BJ (cell line): ENCODE measurements at regions of chr2 and their contacts with region 1.

Region 1: DNA sequence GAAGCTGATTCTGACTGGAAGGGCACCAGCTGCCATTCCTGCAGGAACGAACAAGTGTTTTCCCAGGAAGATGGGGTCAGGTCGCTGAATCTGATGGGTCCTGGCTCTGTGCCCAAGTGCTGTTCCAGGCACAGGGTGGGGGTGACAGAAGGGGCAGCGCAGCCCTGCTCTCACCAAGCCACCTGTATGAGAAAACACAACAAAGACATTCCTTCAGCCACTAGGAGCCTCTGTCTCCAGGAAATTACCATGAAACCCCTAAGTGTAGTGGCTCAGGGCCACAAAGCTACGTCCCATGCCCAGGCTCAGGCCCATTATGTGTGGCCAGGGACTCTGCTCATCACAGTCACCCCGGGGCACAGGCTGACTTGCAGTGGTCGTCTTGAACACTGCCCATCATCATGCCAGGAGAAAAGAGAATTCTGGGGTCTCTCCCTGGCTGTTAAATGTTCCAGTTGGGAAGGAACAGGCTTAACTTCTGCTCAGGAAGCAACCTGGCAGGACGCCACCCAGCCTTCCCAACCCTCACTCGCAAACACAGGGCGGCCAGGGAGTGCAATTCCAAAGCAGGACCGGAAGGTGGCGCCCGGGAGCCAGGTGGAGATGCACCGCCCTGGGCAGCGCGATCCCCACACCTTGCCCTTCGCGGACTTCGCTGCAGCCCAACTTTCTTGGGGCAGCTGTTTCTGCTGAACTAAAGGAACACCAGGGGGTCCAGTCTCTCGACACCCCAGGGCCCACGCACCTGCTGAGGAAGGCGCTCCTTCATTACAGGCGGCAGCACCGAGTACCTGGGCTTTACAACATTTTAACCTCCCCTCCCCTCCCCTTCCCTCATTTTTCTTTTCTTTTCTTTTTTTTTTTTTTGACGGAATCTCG is 11.0 kb upstream of the SFTPB start:
- DNase-seq: no peak
- H3K4me3 ChIP-seq: no peak overlapping the region
- H3K27me3 ChIP-seq: no peaks in the 10 kb centered on the region
- CTCF ChIP-seq: peak; percentile 99

Region 2: DNA sequence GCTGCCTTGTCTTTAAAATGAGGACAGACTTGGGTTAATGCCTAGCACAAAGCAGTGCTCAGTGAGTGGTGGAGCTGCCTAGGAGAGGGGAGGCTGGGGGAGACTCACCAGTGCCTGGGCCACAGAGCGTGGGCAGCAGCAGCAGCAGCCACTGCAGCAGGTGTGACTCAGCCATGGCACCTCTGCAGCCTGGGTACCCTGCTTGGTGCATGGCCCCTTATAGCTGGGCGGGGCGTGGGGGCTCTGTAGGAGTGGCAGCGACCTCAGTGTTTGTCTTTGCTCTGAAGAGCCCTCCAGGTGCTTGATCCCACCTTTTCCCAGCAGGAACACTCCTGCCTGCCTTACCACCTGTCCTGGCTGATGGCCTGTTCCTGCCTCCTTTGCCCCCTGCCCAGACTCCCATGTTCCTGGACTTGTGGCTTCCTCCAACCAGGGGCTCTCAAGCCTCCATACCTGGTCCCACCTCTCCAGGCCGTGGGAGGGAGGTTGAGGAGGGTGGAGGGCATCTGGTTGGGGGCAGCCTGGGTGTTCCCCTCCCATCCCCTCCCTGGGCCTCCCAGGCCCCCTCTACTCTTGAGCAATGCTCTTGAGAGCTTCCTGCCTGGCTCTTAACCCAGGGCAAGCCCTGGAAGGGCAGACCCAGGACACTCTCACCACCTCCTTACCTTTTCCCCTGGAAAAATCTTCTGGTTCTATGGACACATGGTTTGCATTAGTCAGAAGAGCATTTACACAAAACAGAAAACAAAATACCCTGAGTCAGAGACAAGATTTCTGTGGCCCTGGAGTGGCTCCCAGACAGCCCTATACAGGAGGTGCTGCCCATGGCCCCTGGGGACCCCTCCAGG is 10.8 kb before region 1 on chr2 and contains the start of gene SFTPB:
- CTCF ChIA-PET with region 1: interaction called, 13 read pairs
- POLR2A ChIA-PET with region 1: no interaction called
- DNase-seq: no peak
- H3K4me3 ChIP-seq: no peak within 1 kb of the TSS
- H3K27me3 ChIP-seq: no peaks in the 10 kb centered on the region
- CTCF ChIP-seq: no peak
- polyA plus RNA-seq, gene SFTPB: not detected in 2 replicates

Region 3: GRCh38 chr2:85694052-85695025 is 15.3 kb after region 1 on chr2 and contains the start of gene GNLY:
- CTCF ChIA-PET with region 1: interaction called, 34 read pairs
- POLR2A ChIA-PET with region 1: no interaction called
- DNase-seq: no peak
- H3K4me3 ChIP-seq: no peak within 1 kb of the TSS
- H3K27me3 ChIP-seq: peaks cover 4% of the 10 kb centered on the region
- CTCF ChIP-seq: no peak
- polyA plus RNA-seq, gene GNLY: not detected in 2 replicates

Region 4: GRCh38 chr2:85826990-85827878 is 148.2 kb after region 1 on chr2:
- CTCF ChIA-PET with region 1: no interaction called
- POLR2A ChIA-PET with region 1: no interaction called
- DNase-seq: no peak
- H3K4me3 ChIP-seq: no peak overlapping the region
- H3K27me3 ChIP-seq: no peaks in the 10 kb centered on the region; the same call in 1 of the 2 replicates
- CTCF ChIP-seq: peak; percentile 93